ENCODE measurements at regions of chr11 and their contacts with region 1.

Region 1: DNA sequence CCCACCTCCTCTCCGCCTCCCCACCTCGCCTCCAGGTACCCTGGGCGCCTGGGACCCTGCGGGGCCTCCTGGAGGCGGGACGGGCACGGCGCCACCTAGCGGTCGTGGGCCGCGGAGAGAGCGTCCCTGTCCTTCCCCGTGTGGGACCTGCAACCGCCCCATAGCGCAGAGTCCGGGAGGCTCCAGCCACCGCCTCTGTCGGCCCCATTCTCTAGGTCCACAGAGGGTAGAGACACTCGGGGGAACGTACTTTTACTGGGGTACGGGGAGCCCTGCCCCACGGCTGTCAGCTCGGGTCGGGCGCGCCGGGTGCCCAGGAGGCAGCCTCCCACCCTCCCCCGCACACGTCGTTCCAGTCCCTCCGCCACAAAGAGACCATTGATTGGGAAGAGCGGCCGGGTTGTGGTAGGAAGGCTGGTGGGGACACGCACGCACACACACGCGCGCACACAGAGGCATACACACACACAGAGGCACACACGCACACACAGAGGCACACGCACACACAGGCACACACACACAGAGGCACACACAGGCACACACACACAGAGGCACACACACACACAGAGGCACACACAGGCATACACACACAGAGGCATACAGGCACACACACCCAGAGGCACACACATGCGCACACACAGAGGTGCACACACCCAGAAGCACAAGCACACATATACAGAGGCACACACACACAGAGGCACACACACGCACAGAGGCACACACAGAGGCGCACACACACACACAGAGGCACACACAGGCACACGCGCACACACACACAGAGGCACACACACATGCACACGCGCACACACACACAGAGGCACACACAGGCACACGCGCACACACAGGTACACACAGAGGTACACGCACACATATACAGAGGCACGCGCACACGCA is 12.6 kb upstream of the NECTIN1 start:
- DNase-seq: peak in 3 of 6 donors; percentile 42 to 77 (median 49)
- ATAC-seq: peak in 2 of 4 donors; percentile 45 to 46
- H3K4me3 ChIP-seq: no peak overlapping the region
- H3K27ac ChIP-seq: no peak overlapping the region
- H3K4me1 ChIP-seq: peaks cover 7 to 24% (median 16%) of the 10 kb centered on the region in 3 donors
- H3K27me3 ChIP-seq: no peaks in the 10 kb centered on the region
- CTCF ChIP-seq: peak; percentile 31 to 62 (median 46)

Region 2: DNA sequence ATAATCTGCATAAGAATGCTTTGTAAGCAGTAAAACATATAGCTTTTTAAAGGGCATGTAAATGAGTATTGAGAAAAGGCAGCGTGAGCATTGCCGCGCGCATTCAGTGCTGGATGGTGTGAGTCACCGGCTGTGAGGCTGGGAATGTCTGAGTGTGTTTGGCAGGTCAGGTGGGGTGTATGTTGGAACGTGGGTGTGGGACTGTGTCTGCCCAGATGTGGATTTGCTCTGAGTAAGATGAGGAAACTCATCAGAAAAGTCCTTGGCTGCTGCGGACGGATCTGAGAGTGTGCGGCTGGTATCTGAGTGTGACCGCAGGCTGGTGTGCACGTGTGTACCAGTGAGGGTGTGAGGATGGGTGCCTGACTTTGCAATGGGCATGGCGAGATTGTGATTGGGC is 53.6 kb after region 1 on chr11:
- intact Hi-C with region 1: loop called in 1 of 3 experiments (anchors 5 kb)
- DNase-seq: no peak
- ATAC-seq: peak in 2 of 4 donors; percentile 48 to 49
- H3K4me3 ChIP-seq: no peak overlapping the region
- H3K27ac ChIP-seq: no peak overlapping the region
- H3K4me1 ChIP-seq: no peaks in the 10 kb centered on the region
- H3K27me3 ChIP-seq: no peaks in the 10 kb centered on the region
- CTCF ChIP-seq: no peak